Activated naive CD4-positive, alpha-beta T cell treated with anti-CD3 and anti-CD28 coated beads for 36 hours (primary cell): ENCODE measurements at regions of chr1 and their contacts with region 1.

Region 1: DNA sequence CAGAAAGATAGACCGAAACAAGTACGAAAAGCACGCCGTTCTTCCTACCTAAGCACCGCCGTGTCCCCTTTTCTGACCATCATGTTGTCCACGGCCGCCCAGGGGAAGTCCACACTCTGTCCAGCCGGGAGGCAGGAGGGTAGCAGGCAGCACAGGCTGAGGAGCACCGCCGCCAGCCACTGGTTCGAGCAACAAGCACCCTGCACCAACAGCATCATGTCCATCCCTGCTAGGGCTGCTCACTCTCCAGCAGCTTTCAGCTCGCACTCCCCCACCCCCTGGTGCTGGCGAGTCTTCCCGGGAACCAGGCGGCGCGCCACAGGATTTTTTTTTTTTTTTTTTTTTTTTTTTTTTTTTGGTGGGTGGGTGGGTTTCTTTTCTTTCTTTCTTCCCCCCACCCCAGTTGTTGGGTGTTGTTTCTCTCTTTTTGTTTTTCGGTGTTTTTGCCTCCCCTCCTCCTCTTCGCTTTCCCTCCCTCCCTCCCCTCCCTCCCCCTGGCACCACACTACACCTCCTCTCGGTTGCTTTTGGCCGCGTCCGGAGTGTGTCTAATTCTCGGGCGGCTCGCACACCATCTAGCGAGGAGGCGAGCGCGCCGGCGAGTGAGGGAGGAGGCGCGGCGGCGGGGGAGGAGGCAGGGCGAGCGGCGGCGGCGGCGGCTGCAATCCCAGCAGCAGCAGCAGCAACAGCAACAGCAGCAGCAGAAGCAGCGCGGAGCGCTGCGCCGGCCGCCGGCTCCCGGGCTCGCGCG is at the start of gene NEGR1:
- DNase-seq: peak; percentile 56
- H3K4me3 Mint-ChIP-seq: peak within 1 kb of the TSS; percentile 65
- H3K27ac Mint-ChIP-seq: no peak within 1 kb of the TSS
- H3K4me1 Mint-ChIP-seq: peaks cover 17% of the 10 kb centered on the region
- H3K27me3 Mint-ChIP-seq: peaks cover 29% of the 10 kb centered on the region
- total RNA-seq, gene NEGR1: not detected

Region 2: GRCh38 chr1:71809085-71809484 is 473.4 kb before region 1 on chr1:
- CTCF ChIA-PET with region 1: no interaction called
- intact Hi-C with region 1: no loop called
- DNase-seq: no peak
- H3K4me3 Mint-ChIP-seq: no peak overlapping the region
- H3K27ac Mint-ChIP-seq: no peak overlapping the region
- H3K4me1 Mint-ChIP-seq: no peaks in the 10 kb centered on the region
- H3K27me3 Mint-ChIP-seq: no peaks in the 10 kb centered on the region

Region 3: DNA sequence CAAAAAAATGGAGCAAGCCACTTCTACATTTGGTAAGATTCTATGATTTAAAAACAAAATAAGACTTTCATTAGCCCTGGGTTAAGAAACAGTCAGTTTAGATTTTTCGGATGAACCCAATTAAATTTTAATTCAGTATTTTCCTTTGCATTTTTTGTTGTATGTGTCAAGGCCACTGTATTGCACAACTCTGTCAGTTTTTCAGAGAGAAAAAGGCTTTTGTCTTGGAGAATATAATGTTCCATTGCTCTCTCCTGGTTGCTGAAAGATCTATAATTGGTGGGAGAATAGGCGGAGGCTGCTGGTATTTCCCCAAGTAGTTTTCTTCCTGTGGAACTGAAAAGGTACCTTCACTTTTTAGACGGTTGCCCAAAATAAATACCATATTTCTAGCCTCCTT is 84.7 kb before region 1 on chr1:
- CTCF ChIA-PET with region 1: no interaction called
- intact Hi-C with region 1: no loop called
- DNase-seq: no peak
- H3K4me3 Mint-ChIP-seq: no peak overlapping the region
- H3K27ac Mint-ChIP-seq: no peak overlapping the region
- H3K4me1 Mint-ChIP-seq: no peaks in the 10 kb centered on the region
- H3K27me3 Mint-ChIP-seq: no peaks in the 10 kb centered on the region

Region 4: GRCh38 chr1:72936151-72936740 is 653.8 kb after region 1 on chr1:
- CTCF ChIA-PET with region 1: no interaction called
- intact Hi-C with region 1: no loop called
- DNase-seq: no peak
- H3K4me3 Mint-ChIP-seq: no peak overlapping the region
- H3K27ac Mint-ChIP-seq: no peak overlapping the region
- H3K4me1 Mint-ChIP-seq: no peaks in the 10 kb centered on the region
- H3K27me3 Mint-ChIP-seq: no peaks in the 10 kb centered on the region

Region 5: GRCh38 chr1:74197657-74198552 is 1915.5 kb after region 1 on chr1 and contains the starts of genes FPGT and LRRIQ3:
- CTCF ChIA-PET with region 1: no interaction called
- intact Hi-C with region 1: loop called (anchors 1 kb)
- DNase-seq: peak; percentile 95
- H3K4me3 Mint-ChIP-seq: peak within 1 kb of the TSS; percentile 89
- H3K27ac Mint-ChIP-seq: peak within 1 kb of the TSS; percentile 92
- H3K4me1 Mint-ChIP-seq: peaks cover 17% of the 10 kb centered on the region
- H3K27me3 Mint-ChIP-seq: no peaks in the 10 kb centered on the region
- total RNA-seq, gene FPGT: 11.0 to 13.9 TPM
- total RNA-seq, gene LRRIQ3: 1.1 to 1.2 TPM